Prostate gland (tissue), 2 donors: ENCODE measurements at regions of chr16 and their contacts with region 1.

Region 1: DNA sequence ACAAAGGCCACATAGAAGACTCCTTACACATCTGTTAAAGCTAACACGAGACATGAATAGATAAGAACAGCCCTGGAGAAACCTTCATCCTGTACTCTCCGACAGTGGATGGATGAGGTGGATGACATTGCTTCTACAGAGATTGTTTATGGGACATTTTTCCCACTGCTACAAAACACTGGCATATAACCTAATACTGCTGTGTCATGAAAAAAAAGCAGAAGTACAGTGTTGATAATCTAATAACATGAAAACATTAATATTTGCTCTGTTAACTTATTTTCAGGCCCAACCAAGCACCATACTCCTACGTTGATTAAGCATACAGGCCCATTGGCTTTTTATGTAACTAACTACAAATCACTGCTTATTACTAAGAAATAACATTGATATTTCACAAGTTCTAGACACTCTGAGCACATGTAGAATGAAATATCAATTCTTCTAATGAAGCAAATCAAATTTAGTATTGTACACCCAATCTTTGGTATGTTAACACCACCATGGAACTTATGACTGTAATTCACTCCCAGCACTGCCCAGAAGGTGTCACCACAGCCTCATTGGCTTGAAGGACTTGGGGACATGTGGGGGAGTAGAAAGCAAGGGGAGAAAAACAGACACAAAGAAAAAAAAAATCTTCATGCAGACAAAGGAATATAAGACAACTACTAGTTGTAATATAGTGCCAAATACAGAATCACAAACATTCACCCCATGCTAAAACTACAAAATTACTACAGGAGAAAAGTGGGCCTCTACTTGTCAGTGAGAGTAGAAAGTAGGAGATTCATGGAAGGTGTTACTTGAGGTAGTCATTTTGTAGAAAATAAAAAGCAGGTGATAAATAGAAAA is 330.0 kb upstream of the PMFBP1 start:
- DNase-seq: peak; percentile 34
- H3K4me3 ChIP-seq: no peak overlapping the region
- H3K27ac ChIP-seq: no peak overlapping the region
- H3K4me1 ChIP-seq: no peaks in the 10 kb centered on the region
- H3K27me3 ChIP-seq: no peaks in the 10 kb centered on the region
- CTCF ChIP-seq: peak in 3 of 4 experiments; percentile 57 to 67 (median 63)
- POLR2A ChIP-seq: no peak

Region 2: GRCh38 chr16:72400257-72400882 is 101.6 kb before region 1 on chr16:
- intact Hi-C with region 1: no loop called
- DNase-seq: peak; percentile 12
- H3K4me3 ChIP-seq: no peak overlapping the region
- H3K27ac ChIP-seq: no peak overlapping the region
- H3K4me1 ChIP-seq: no peaks in the 10 kb centered on the region
- H3K27me3 ChIP-seq: no peaks in the 10 kb centered on the region
- CTCF ChIP-seq: peak; percentile 43 to 53 (median 46)
- POLR2A ChIP-seq: no peak

Region 3: DNA sequence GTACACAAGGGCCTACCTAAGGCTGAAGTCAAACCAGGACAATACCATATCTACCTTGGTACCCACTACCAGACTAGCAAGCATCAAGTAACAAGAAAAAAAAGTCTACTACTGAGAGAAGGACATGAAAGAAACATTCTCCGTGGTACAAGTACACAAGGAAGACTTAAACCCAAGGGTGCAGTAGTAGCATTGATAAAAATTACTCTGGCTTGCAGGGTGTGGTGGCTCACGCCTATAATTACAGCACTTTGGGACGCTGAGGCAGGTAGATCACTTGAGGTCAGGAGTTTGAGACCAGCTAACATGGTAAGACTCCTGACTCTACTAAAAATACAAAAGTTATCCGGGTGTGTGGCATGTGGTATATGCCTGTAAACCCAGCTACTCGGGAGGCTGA is 56.5 kb after region 1 on chr16:
- intact Hi-C with region 1: no loop called
- DNase-seq: no peak
- H3K4me3 ChIP-seq: no peak overlapping the region
- H3K27ac ChIP-seq: no peak overlapping the region
- H3K4me1 ChIP-seq: no peaks in the 10 kb centered on the region
- H3K27me3 ChIP-seq: no peaks in the 10 kb centered on the region
- CTCF ChIP-seq: no peak
- POLR2A ChIP-seq: no peak

Region 4: DNA sequence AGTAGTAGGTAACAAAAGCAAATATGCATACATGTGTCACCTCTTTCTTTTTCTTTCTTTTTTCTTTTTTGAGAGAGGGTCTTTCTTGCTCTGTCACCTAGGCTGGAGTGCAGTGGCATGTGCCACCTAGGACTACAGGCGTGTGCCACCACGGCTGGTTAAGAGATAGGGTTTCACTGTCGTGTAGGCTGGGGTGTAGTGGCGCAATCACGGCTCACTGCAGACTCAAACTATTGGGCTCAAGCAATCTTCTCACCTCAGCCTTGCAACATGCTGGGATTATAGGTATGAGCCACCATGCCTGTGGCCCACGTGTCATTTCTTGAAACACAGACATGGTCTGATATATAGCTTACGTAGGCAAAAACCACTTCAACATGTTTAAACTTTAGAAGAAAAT is 67.7 kb after region 1 on chr16:
- intact Hi-C with region 1: no loop called
- DNase-seq: no peak
- H3K4me3 ChIP-seq: no peak overlapping the region
- H3K27ac ChIP-seq: no peak overlapping the region
- H3K4me1 ChIP-seq: no peaks in the 10 kb centered on the region
- H3K27me3 ChIP-seq: no peaks in the 10 kb centered on the region
- CTCF ChIP-seq: no peak
- POLR2A ChIP-seq: no peak

Region 5: DNA sequence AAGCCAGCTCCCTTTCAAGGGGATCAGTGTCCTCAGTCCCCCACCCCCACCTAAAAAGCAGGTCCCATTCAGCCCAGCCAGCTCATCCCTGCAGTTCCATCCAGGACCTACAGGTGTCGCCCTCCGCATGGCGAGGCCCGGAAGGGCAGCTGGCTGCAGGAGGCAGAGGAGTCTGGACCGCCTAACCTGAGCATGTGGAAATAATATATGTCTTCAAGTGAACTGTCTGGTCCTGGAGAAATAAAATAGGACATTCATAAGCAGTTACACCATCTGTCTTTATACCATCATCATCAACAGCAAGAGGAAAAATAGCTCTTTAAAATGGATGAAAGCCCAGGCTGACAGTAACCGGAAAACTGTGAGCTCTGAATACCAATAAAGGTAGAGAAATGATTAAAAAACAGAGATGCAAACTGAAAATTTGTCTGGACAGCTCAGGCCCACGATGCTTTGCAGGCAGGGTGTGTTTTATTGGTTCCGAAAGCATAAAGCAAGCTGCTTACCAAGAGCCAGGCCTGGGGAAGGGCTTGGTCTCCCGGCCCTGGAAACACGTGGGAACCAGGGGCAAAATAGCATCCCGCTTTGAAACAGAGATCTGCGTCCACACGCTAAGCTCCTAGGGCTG is 330.8 kb after region 1 on chr16:
- intact Hi-C with region 1: loop called (anchors 10 kb)
- DNase-seq: peak; percentile 79
- H3K4me3 ChIP-seq: no peak overlapping the region
- H3K27ac ChIP-seq: peak overlapping the region; percentile 21 to 34
- H3K4me1 ChIP-seq: peaks cover 6% of the 10 kb centered on the region
- H3K27me3 ChIP-seq: no peaks in the 10 kb centered on the region
- CTCF ChIP-seq: peak; percentile 95 to 97 (median 96)
- POLR2A ChIP-seq: no peak